MCF 10A (cell line): ENCODE measurements at regions of chr6 and their contacts with region 1.

Region 1: DNA sequence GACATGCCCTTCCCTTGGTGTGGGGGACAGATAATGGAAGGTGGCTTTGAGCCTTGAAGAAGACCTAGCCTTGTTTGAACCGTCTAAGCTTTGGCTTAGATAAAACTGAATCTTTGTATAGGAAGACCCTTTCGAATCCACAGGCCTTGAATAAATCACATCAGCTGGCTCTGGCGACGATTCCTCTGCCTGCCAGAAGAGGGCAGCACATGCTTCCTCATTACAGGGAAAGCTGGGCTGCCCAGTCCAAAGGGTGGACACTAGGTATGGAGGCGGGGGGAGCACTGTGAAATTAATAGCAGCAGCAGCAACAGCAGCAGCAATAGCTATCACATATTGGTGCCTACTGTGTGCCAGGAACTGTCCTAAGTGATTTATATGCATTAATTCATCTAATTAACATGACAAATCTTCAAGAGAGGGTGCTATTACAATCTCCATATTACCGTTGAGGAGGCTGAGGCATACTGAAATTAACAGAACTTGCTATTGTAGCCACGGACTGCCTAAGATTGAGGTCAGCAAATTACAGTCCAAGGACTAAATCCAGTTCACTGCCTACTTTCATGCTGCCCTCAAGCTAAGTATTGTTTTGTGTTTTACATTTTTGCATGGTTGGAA is 85.1 kb downstream of the CLIC5 start:
- DNase-seq: peak; percentile 69
- H3K4me3 Mint-ChIP-seq: no peak overlapping the region
- H3K27ac Mint-ChIP-seq: no peak overlapping the region
- H3K4me1 Mint-ChIP-seq: no peaks in the 10 kb centered on the region
- H3K27me3 Mint-ChIP-seq: peaks cover 26% of the 10 kb centered on the region
- CTCF ChIP-seq: peak; percentile 93

Region 2: DNA sequence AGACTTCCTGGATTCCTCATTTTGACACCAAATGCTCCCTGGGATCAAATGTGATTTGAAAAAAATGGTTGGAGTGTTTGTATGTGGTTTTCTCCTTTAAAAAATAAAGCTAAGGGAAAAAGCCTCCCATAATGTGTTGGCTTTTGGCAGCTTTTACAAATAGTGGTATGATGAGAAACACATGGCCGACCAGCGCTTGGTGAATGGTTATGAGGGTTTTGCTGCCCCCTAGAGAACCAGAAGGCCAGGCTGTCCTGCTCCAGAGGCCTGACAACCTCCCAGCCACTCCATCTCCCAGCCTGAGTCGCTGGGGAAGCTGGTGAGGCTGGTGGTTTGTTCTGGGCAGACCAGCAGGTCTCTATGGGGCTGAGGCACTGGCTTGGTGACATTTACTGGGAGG is 15.8 kb after region 1 on chr6:
- CTCF ChIA-PET with region 1: interaction called, 26 read pairs
- POLR2A ChIA-PET with region 1: no interaction called
- intact Hi-C with region 1: no loop called
- DNase-seq: no peak
- H3K4me3 Mint-ChIP-seq: no peak overlapping the region
- H3K27ac Mint-ChIP-seq: no peak overlapping the region
- H3K4me1 Mint-ChIP-seq: peaks cover 6% of the 10 kb centered on the region
- H3K27me3 Mint-ChIP-seq: no peaks in the 10 kb centered on the region
- CTCF ChIP-seq: no peak